ENCODE measurements at regions of chr14 and their contacts with region 1.

Region 1: GRCh38 chr14:92106143-92106926 is at the start of gene ATXN3:
- DNase-seq: peak; percentile 98
- CTCF ChIP-seq: peak; percentile 75

Region 2: GRCh38 chr14:91947471-91948184 is 158.7 kb before region 1 on chr14 and contains the start of gene FBLN5:
- CTCF ChIA-PET with region 1: no interaction called
- POLR2A ChIA-PET with region 1: no interaction called
- DNase-seq: no peak
- CTCF ChIP-seq: no peak

Region 3: DNA sequence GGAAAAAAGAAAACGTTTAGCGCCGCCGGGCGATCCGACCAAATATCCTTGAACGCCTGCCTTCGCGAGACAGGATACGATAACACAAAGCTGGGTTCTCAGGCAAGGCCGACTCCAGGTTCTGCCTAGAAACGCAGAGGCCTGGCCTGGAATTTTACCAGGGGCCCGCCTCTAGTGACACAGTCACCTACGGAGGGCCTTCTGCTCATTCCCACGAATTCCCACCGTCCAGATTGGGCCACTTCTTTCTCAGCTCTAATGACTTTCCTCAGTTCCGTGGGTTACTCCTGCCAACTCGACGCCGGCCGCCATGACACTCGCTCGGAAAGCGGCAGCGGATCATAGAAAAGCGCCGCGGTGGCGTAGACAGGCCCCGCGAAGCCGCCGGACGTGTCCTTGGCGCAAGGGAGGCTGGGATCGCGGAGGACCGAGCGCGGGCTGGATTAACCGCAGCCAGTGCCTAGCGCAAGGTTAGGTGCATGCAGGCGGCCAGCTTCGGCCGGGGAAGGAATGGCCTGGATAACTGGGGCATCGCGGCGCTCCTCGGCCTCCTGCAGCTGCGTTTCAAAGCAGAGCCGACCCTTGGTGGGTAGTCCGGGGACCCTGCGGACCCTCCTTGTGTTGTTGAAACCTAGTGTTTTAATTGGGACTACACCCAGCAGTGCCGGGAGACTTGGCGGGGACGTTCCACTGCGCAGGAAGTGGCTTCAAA is 66.5 kb before region 1 on chr14 and contains the start of gene TRIP11:
- CTCF ChIA-PET with region 1: interaction called, 14 read pairs
- POLR2A ChIA-PET with region 1: interaction called, 5 read pairs
- DNase-seq: peak; percentile 94
- CTCF ChIP-seq: no peak

Region 4: GRCh38 chr14:92121670-92122350 is 15.5 kb after region 1 on chr14 and contains the starts of genes CPSF2 and NDUFB1:
- CTCF ChIA-PET with region 1: interaction called, 134 read pairs
- POLR2A ChIA-PET with region 1: interaction called, 8 read pairs
- DNase-seq: peak; percentile 93
- CTCF ChIP-seq: no peak

Region 5: GRCh38 chr14:92135267-92135666 is 28.9 kb after region 1 on chr14:
- CTCF ChIA-PET with region 1: interaction called, 10 read pairs
- POLR2A ChIA-PET with region 1: no interaction called
- DNase-seq: no peak
- CTCF ChIP-seq: peak; percentile 15

Region 6: GRCh38 chr14:92360651-92361370 is 254.5 kb after region 1 on chr14:
- CTCF ChIA-PET with region 1: no interaction called
- POLR2A ChIA-PET with region 1: no interaction called
- DNase-seq: no peak
- CTCF ChIP-seq: no peak

Region 7: DNA sequence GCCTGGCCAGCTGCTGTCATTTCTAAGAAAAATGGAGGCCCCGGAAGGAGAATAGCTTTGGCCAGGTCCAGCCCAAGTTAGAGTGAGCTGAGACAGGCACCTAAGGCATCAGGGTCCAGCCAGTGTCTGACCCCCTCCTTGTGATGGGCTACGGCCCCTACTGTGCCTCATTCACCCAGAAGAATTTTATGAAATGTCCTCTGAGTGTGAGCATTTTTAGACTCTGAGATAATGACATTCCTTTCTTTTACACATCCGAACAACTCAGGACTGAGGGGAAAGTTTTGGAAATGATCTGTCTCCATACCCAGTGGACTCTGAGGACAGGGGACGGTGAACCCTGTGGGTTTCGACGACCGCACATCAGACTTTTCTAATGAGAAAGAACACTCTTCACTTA is 267.0 kb after region 1 on chr14:
- CTCF ChIA-PET with region 1: no interaction called
- POLR2A ChIA-PET with region 1: no interaction called
- DNase-seq: no peak
- CTCF ChIP-seq: no peak